ENCODE measurements at regions of chr5 and their contacts with region 1.

Region 1: DNA sequence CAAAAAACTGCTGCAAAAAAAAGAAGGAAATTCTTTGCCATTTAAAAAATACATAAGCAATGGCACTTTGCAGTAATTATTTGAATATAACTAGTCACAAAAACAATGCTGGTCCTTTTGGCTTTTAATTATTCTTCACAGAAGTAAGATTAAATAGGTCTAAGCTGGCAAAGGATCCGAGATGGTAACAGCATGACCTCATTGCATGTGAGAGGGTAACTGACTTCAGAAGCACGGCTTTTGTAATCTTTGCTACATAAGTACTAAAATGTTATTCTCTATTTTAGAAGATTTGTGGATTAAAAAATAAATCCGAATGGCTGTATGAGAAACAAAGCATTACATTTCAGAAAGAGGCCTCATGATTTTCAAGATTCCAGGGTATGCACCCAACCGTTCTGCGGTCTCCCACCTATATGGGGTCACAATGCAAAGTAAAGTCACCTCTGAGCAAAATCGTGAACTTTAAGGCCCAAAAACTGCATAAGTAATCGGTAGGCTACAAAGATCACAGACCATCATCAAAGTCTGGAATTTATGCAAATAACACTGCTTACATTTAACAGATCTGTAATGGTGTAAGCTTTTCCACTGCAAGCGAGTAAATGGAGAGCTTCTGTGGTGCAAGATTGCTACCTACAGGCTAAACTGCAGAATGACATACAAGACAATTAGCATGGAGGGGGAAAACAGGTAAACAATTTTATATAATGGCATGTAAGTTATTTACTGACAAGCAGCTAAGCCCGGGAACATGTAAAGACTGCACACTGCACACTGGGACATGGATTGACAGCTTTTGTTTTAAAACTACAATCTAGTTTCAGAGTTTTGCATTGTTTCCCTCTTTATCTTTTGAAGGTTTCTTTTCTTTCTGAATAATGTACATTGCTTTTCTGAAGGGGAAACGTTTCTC is 231.6 kb downstream of the SLF1 start:
- H3K4me3 ChIP-seq: no peak overlapping the region
- H3K27ac ChIP-seq: no peak overlapping the region
- H3K4me1 ChIP-seq: peaks cover 3% of the 10 kb centered on the region; the same call in 1 of the 2 replicates
- CTCF ChIP-seq: no peak; the same call in 1 of the 2 replicates

Region 2: DNA sequence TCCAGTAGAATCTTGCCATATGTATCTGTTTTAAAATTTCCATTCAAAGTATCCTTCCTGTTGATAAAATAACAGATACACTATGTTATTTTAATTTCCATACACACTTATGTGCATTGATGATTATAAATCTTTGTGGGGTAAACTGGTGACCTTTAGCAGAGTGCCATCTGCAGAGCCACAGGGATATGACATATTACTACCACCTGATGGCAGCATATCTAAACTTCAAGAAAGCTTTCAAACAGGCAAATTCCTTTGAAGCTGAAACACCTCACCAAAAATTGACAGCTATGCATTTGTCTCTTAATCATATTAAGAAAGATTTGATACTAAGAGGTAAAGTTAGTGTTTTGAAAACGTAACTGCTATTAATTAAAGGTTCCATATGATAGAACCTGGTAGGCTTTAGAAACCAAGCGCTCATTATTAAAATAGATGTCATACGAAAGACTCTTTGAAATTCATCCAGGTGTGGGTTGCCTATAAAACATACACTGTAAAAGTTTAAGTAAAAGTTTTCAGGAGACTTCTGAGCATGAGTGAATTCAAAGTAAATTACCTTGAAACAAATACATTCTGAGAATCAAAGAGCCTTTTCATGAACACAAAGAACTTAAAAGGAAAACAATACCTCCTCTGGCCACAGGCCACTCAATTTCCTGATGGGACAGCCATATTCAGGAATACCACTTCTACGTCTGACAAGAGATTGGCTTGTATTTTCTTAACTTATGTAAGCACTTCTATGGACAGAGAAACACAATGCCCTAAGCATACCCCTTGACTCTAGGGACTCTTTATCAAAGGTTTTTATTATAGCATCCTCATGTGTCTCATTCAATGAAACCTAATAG is 325.0 kb before region 1 on chr5:
- CTCF ChIA-PET with region 1: interaction called, 16 read pairs
- POLR2A ChIA-PET with region 1: no interaction called
- H3K4me3 ChIP-seq: no peak overlapping the region
- H3K27ac ChIP-seq: no peak overlapping the region
- H3K4me1 ChIP-seq: no peaks in the 10 kb centered on the region
- CTCF ChIP-seq: no peak

Region 3: GRCh38 chr5:94832685-94833084 is 17.4 kb before region 1 on chr5:
- CTCF ChIA-PET with region 1: interaction called, 13 read pairs
- POLR2A ChIA-PET with region 1: no interaction called
- H3K4me3 ChIP-seq: no peak overlapping the region
- H3K27ac ChIP-seq: no peak overlapping the region
- H3K4me1 ChIP-seq: no peaks in the 10 kb centered on the region
- CTCF ChIP-seq: no peak